HEK293 (cell line): ENCODE measurements at regions of chr10 and their contacts with region 1.

Region 1: DNA sequence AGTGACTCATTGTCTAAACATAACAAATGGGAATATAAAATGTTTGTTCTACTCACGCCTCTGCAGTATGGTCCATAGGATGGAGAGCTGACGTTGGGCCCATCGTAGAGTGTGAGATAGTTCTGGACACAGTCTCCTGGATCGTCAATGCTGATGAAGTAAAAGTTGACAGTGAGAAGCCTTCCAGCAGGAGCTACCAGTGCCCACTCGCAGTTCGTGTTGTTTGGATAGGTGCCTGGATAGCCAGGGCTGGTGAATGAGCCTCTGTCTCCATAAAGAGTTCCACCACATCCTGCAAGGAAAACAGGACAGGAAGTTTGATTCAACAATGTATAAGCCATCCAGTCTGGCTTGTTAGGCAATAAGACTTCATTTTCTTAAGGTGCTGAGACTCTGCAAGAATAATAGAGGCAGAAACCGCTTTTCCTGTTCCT is 79.6 kb downstream of the OR13A1 start:
- H3K4me3 ChIP-seq: no peak overlapping the region
- H3K27ac ChIP-seq: no peak overlapping the region
- H3K4me1 ChIP-seq: no peaks in the 10 kb centered on the region
- CTCF ChIP-seq: no peak

Region 2: DNA sequence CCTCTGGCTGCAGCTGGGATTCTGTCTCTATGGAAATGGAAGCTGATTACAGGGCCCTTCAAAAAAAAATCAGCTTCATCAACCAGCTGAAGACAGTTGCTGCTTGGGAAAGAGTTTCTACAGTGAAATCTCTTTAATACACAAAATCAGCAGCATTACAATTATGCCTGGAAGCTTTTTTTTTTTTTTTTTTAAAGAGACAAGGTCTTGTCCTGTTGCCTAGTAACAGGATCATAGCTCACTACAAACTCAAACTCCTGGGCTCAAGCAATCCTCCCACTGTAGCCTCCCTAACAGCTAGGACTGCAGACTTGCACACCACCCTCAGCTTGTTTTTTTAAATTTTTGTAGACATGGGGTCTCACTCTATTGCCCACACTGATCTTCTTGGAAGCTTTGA is 14.9 kb before region 1 on chr10:
- CTCF ChIA-PET with region 1: interaction called, 13 read pairs
- POLR2A ChIA-PET with region 1: no interaction called
- H3K4me3 ChIP-seq: no peak overlapping the region
- H3K27ac ChIP-seq: no peak overlapping the region
- H3K4me1 ChIP-seq: no peaks in the 10 kb centered on the region
- CTCF ChIP-seq: no peak

Region 3: DNA sequence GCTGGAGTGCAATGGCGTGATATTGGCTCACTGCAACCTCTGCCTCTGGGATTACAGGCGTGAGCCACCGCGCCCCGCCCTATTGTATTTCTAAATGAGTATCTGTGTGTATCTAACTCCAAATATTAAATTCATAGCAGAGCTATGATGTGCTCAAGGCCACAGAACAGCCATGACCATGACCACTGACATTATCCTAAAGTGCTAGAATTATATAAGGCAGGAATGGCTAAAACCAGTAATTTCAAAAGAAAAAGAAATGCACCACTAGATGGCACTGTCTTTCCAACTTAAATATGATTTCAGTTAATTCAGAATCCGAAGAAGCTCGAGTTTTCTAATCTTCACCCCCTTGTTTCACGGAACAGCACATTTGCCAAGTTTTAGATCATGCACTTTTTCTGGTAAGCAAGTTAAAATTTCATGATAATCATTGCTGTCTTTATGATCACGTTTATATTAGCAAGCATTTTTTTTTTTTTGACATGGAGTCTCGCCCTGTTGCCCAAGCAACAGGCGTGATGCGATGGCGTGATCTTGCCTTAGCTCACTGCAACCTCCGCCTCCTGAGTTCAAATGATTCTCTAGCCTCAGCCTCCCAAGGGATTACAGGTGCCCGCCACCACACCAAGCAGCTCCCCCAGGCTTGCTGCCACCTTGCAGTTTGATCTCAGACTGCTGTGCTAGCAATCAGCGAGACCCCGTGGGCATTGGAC is 14.3 kb after region 1 on chr10:
- CTCF ChIA-PET with region 1: interaction called, 11 read pairs
- POLR2A ChIA-PET with region 1: no interaction called
- H3K4me3 ChIP-seq: peak overlapping the region; percentile 31
- H3K27ac ChIP-seq: no peak overlapping the region
- H3K4me1 ChIP-seq: no peaks in the 10 kb centered on the region
- CTCF ChIP-seq: 0 out of 2 replicates have a peak, but pooled peaks have one; percentile 7

Region 4: DNA sequence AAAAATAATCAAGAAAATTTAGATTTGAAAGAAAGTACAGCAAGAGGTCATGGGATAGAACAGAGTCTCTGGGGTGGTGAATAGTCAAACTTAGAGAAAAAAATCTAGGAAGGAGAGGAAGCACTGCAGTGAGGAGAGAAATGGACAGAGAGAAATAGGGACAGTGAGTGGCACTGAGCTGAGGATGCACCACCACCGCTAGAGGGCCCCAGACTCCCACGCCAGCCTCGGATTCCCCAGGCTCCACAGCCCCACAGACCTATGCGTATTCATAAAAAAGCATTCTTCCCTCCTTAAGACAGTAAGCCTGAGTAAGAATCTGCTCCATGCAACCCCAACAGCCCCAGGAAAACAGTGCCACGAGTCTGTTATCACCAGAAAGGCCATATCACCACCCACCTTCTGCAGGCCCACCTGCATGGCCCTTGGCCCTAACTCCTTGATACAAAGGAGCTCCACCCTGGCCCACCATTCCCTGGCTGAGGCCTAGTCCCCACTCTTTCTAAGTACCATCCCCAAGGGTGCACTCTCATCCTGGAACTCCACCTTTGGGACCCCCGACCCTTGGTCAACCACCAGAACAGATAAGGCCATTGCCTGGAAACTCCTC is 229.2 kb after region 1 on chr10:
- CTCF ChIA-PET with region 1: interaction called, 10 read pairs
- POLR2A ChIA-PET with region 1: no interaction called
- H3K4me3 ChIP-seq: no peak overlapping the region
- H3K27ac ChIP-seq: no peak overlapping the region
- H3K4me1 ChIP-seq: no peaks in the 10 kb centered on the region
- CTCF ChIP-seq: peak; percentile 87